Naive thymus-derived CD4-positive, alpha-beta T cell (primary cell): ENCODE measurements at regions of chr12 and their contacts with region 1.

Region 1: DNA sequence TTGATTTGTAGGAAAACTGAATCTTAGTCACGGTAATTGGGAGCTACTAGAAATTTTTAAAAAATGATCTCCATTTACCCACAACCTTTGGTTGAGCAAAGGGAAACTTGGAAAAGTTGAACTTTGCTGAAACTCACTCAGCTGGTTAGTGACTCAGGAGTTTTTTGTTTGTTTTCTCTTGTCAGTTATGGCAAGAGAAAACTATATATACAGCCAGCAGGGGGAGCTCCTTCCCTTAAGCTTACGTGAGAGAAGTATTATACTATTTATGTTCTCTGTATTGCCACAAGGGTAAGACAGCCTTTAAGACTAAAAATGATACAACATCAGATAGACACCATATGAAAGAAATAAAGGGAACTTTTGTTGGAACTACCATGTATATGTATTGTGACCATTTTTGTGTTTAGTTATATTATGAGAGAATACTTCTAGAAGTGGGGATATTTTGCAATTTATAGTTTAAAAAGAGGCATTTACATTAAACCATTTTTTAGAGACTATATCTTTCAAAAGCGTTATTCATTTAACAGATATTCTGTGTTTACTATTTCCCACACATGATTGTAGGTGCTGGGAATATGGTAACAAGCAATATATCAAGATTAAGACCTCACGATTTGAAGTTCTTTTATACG is 28.1 kb upstream of the TBC1D30 start:
- DNase-seq: peak in 8 of 9 donors; percentile 33 to 67 (median 58)
- ATAC-seq: peak; percentile 96
- H3K4me3 ChIP-seq: no peak overlapping the region
- H3K4me3 Mint-ChIP-seq: no peak overlapping the region
- H3K27ac ChIP-seq: no peak overlapping the region
- H3K27ac Mint-ChIP-seq: no peak overlapping the region
- H3K4me1 ChIP-seq: no peaks in the 10 kb centered on the region
- H3K4me1 Mint-ChIP-seq: peaks cover 0 to 3% (median 0%) of the 10 kb centered on the region in 7 donors
- H3K27me3 ChIP-seq: no peaks in the 10 kb centered on the region
- H3K27me3 Mint-ChIP-seq: peaks cover 12 to 28% (median 15%) of the 10 kb centered on the region in 5 donors

Region 2: GRCh38 chr12:64544371-64545080 is 251.8 kb before region 1 on chr12:
- CTCF ChIA-PET with region 1: interaction called, 9 read pairs
- POLR2A ChIA-PET with region 1: interaction called, 5 read pairs
- intact Hi-C with region 1: loop called (anchors 1 to 5 kb)
- DNase-seq: no peak
- ATAC-seq: no peak
- H3K4me3 ChIP-seq: no peak overlapping the region
- H3K4me3 Mint-ChIP-seq: no peak overlapping the region
- H3K27ac ChIP-seq: no peak overlapping the region
- H3K27ac Mint-ChIP-seq: no peak overlapping the region
- H3K4me1 ChIP-seq: no peaks in the 10 kb centered on the region
- H3K4me1 Mint-ChIP-seq: peaks cover 0 to 4% (median 2%) of the 10 kb centered on the region in 7 donors
- H3K27me3 ChIP-seq: no peaks in the 10 kb centered on the region
- H3K27me3 Mint-ChIP-seq: peaks cover 0 to 16% (median 0%) of the 10 kb centered on the region in 5 donors

Region 3: DNA sequence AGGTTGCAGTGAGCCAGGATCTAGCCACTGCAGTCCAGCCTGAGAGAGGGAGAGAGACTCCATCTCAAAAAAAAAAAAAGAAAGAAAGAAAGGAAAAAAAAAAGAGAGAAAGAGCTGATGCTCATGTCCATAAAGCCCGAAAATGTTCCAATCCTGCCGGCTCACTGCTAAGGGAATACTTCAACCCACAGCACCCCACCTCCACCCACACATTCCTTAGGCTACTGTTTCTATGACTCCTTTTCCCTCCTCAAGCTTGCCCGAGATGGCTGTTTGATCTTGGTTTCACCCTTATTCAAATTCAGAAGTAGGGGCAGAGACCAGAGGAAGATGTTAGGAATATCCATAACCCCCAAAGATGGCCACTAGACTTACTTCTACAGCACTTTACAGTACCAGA is 245.6 kb before region 1 on chr12:
- CTCF ChIA-PET with region 1: interaction called, 9 read pairs
- POLR2A ChIA-PET with region 1: interaction called, 5 read pairs
- intact Hi-C with region 1: loop called (anchors 1 to 5 kb)
- DNase-seq: no peak
- ATAC-seq: no peak
- H3K4me3 ChIP-seq: no peak overlapping the region
- H3K4me3 Mint-ChIP-seq: no peak overlapping the region
- H3K27ac ChIP-seq: no peak overlapping the region
- H3K27ac Mint-ChIP-seq: peak overlapping the region in 3 of 9 donors; percentile 7 to 83 (median 18)
- H3K4me1 ChIP-seq: peaks cover 0 to 4% of the 10 kb centered on the region in 2 donors
- H3K4me1 Mint-ChIP-seq: peaks cover 2 to 11% (median 9%) of the 10 kb centered on the region in 7 donors
- H3K27me3 ChIP-seq: no peaks in the 10 kb centered on the region
- H3K27me3 Mint-ChIP-seq: peaks cover 0 to 20% (median 0%) of the 10 kb centered on the region in 5 donors

Region 4: DNA sequence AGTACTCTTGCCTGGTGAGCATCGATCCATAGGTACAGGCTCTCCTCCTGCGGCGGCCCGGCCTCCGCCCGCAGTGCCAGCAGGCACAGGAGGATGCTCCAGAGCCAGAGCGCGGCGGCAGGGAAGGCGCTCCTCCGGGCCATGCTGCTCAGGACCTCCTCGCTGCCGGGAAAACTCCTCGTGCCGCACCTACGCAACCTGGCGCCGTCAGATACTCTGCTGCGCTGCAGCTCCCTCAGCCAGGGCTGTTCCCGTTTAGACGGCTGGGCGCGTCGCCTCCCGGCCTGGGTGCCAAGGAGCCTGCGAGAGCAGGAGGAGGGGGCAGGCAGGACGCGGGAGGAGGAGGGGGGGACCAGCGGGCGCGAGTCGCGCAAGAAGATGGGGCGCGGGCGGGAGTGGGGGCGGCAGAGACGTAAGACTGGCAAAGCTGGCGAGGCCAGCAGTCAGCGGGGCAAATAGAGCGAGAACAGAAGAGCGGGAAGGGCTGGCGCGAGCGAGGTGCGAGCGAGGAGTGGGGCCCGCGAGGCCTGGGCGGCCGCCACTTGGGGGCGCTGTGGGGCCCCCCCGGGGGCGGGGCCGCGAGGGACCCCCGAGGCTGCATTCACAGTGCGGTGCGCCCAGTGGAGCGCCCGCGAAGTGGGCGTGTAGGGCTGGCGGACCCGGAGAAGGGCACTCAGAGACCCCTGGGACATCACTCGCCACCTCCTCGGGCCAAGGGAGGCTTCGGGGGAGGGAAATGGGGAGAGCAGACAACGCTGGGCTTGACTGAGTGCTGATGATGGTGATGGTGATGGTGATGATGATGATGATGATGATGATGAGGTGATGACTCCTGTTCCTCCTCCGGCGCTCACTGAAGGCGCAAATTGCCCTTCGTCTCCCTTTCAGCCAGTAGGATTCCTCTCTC is 325.0 kb after region 1 on chr12 and contains the start of gene WIF1:
- CTCF ChIA-PET with region 1: no interaction called
- POLR2A ChIA-PET with region 1: no interaction called
- intact Hi-C with region 1: loop called in 1 of 2 experiments (anchors 5 kb)
- DNase-seq: peak in 5 of 9 donors; percentile 6 to 34 (median 10)
- ATAC-seq: peak; percentile 66
- H3K4me3 ChIP-seq: peak within 1 kb of the TSS; percentile 22
- H3K4me3 Mint-ChIP-seq: peak within 1 kb of the TSS; percentile 42 to 77 (median 62)
- H3K27ac ChIP-seq: no peak within 1 kb of the TSS
- H3K27ac Mint-ChIP-seq: peak within 1 kb of the TSS in 1 of 9 donors; percentile 62
- H3K4me1 ChIP-seq: no peaks in the 10 kb centered on the region
- H3K4me1 Mint-ChIP-seq: peaks cover 0 to 12% (median 8%) of the 10 kb centered on the region in 7 donors
- H3K27me3 ChIP-seq: peaks cover 0 to 6% of the 10 kb centered on the region in 2 donors
- H3K27me3 Mint-ChIP-seq: peaks cover 41 to 59% (median 52%) of the 10 kb centered on the region in 5 donors
- total RNA-seq, gene WIF1: not detected

Region 5: GRCh38 chr12:65986047-65986446 is 1189.7 kb after region 1 on chr12:
- CTCF ChIA-PET with region 1: no interaction called
- POLR2A ChIA-PET with region 1: no interaction called
- intact Hi-C with region 1: loop called in 1 of 2 experiments (anchors 10 kb)
- DNase-seq: no peak
- ATAC-seq: no peak
- H3K4me3 ChIP-seq: no peak overlapping the region
- H3K4me3 Mint-ChIP-seq: no peak overlapping the region
- H3K27ac ChIP-seq: no peak overlapping the region
- H3K27ac Mint-ChIP-seq: no peak overlapping the region
- H3K4me1 ChIP-seq: no peaks in the 10 kb centered on the region
- H3K4me1 Mint-ChIP-seq: no peaks in the 10 kb centered on the region
- H3K27me3 ChIP-seq: no peaks in the 10 kb centered on the region
- H3K27me3 Mint-ChIP-seq: peaks cover 0 to 14% (median 0%) of the 10 kb centered on the region in 5 donors

Region 6: GRCh38 chr12:66087365-66087943 is 1291.1 kb after region 1 on chr12:
- CTCF ChIA-PET with region 1: no interaction called
- POLR2A ChIA-PET with region 1: no interaction called
- intact Hi-C with region 1: loop called in 1 of 2 experiments (anchors 2 kb)
- DNase-seq: peak in 7 of 9 donors; percentile 9 to 42 (median 29)
- ATAC-seq: peak; percentile 72
- H3K4me3 ChIP-seq: no peak overlapping the region
- H3K4me3 Mint-ChIP-seq: no peak overlapping the region
- H3K27ac ChIP-seq: no peak overlapping the region
- H3K27ac Mint-ChIP-seq: no peak overlapping the region
- H3K4me1 ChIP-seq: no peaks in the 10 kb centered on the region
- H3K4me1 Mint-ChIP-seq: no peaks in the 10 kb centered on the region
- H3K27me3 ChIP-seq: peaks cover 0 to 5% of the 10 kb centered on the region in 2 donors
- H3K27me3 Mint-ChIP-seq: peaks cover 13 to 30% (median 27%) of the 10 kb centered on the region in 5 donors